ENCODE measurements at regions of chr6 and their contacts with region 1.

Region 1: DNA sequence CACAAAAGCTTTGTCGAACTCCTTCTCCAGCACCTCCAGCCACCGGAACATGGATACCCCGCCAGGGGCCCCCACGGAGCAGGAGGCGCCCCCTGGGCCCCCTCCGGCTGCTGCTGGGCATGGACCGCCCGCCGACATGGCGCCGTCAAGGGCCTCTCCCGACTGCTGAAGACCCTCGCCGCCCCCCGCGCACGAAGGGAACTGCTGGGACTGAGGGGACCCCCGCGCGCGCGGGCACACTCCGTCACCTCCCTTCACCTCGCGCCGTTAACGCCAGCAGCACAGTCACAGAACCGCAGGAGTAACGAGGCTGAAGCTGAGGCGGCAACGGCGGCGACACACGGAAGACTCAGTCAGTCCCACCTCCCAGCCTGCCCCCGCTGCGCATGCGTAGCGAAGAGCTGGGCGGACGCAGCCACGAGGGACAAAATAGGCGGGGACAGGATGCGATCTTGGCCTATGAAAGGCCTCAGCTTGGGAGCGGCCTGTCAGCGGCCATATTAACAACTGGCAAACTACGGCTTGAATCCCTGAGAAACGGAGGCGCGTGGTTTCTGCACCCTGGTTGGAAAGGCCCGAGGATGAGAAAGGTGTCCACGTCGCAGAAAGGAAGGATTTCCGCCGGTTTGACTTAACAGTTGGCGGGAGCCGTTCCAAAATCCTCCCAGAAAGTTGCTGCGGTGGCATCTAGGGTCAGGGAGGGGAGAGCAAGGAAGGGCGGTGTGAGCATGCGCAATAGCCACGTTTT is at the start of gene GOPC:
- DNase-seq: peak; percentile 88
- H3K4me3 ChIP-seq: peak within 1 kb of the TSS; percentile 91
- CTCF ChIP-seq: peak; percentile 42

Region 2: DNA sequence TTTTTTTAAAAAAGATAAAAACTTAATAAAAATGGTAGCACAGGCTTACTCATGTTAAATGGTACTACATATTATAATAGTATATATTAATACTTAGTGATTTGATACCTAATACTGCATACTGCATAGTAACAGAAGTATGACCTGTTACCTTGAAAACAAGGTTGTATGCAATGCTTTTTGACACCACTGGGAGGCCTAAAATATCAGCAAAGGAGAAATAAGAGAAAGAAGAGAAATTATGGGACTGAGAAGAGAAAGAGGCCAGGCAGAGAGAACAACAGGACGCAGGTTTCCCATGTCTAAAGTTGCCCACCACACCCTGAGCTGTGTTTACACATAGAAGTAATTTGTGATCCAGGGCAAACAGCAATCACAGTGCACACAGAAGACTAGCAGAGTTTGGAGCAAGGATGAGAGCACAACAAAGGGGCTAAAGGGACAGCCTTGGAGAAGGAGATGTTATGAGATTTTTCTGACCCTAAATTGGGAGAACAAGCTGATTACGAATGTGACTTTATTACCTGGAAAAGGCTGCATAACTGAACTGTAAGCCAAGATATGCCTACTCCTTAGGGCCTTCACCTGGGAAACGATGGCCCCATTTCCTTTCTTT is 249.8 kb before region 1 on chr6:
- CTCF ChIA-PET with region 1: interaction called, 75 read pairs
- POLR2A ChIA-PET with region 1: no interaction called
- DNase-seq: no peak
- H3K4me3 ChIP-seq: no peak overlapping the region
- CTCF ChIP-seq: peak; percentile 34

Region 3: DNA sequence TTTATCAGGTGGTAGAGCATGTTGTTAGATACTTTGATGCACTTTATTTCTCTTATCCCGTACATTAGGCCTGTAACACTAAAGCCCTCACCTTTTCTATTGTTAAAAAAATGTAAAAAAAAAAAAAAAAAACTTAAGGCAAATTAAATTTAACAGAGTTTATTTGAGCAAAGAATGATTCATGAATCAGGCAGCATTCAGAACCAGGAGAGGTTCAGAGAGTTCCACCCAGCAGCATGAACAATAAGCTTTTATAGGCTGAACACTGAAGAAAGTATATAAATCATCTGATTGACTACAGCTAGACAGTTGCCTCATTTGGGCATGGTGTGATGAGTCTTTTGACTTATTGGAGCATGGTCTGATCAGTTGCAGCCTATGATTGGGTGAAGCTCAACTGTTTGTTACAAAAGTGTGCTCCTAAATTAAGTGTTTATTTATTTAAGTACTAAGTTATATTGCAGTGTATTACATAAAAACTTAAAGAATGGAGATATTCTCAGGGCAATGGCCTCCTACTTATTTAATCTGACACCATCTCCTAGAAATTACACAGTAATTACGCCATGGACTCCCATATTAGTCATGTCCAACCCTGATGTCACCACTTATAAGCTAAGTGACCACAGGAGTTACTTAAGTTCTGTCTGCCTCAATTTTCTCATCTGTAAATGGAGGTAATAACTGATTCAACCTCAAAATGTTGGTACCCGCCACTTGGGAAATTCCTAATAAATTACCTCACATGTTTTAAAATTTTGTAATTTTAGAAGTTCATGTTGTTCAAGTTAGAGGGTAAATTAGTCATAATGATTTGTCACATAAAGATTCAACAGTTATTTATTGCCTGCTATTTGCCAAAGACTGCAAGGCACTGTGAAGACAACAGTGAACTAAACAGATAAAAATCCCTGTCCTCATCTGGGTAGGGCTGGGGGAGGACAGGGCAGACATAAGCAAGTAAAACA is 161.5 kb before region 1 on chr6:
- CTCF ChIA-PET with region 1: interaction called, 39 read pairs
- POLR2A ChIA-PET with region 1: interaction called, 5 read pairs
- DNase-seq: peak; percentile 96
- H3K4me3 ChIP-seq: no peak overlapping the region
- CTCF ChIP-seq: no peak

Region 4: DNA sequence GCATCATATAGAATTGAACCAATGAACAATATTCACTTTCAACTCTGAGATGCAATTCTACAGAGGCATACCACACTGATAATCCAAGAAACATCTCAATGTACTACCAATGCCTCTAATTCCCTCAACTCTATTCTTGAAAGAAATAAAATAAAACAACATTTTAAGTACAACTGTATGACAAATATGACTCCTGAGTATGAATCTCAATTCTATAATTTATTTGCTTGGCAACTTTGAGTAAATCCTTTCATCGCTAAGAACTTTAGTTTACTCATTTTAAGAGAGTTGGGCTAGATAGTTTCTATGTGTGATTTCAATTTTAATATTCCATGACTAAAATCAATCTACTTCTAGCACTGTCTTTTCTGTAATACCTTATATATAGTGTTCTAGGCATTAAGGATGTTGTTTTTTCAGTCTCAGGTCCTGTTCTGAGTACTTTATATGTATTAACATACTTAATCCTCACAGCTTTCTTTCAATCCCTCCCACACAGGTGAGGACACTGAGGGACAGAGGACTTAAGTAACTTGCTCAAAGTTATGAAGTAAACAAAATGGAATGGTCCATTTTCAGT is 33.4 kb before region 1 on chr6:
- CTCF ChIA-PET with region 1: interaction called, 11 read pairs
- POLR2A ChIA-PET with region 1: interaction called, 3 read pairs
- DNase-seq: no peak
- H3K4me3 ChIP-seq: no peak overlapping the region
- CTCF ChIP-seq: no peak